Heart left ventricle (tissue), 16 donors: ENCODE measurements at regions of chr11 and their contacts with region 1.

Region 1: DNA sequence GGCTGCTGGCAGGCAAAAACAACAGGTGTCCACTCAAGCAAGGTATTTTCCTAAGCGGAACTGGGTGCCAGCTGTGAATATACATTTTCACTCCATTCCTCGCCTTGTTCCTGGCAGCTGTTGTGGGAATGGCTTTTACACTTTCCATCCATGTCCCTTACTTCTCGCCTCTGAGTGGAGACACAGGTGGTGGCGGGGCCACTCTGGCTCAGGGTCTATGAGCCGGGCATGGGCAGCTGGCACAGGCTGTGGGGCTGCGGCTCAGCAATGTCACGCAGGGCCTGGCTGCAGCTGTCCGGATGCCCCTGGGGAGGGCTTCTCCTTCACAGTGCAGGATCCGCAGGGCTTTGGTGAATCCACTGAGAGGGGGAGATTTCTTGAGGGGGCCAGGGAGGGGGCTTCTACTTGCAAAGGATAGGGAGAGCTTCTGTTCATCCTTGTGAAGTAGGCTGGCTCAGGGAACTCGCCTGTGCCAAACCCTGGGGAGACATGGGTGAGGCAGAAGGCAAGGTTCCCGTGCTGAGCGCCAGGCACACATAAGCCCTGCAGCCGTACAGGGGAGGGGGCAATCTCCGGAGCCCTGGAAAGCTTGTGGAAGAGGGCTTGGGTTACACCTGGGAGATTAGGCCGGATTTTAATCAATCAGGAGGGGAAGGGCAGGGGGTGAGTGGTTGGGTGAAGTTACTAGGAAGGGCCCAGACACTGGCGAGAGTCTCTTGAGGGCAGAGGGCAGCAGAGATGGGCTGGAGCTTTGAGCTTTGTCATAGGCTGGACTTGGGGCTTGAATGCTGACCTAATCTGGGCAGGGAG is 45.7 kb downstream of the KCNQ1OT1 start:
- DNase-seq: peak in 1 of 5 donors; percentile 10
- ATAC-seq: no peak
- H3K4me3 ChIP-seq: no peak overlapping the region
- H3K27ac ChIP-seq: peak overlapping the region in 1 of 12 donors; percentile 47
- H3K4me1 ChIP-seq: peaks cover 0 to 22% (median 0%) of the 10 kb centered on the region in 12 donors
- H3K27me3 ChIP-seq: no peaks in the 10 kb centered on the region
- CTCF ChIP-seq: no peak
- POLR2A ChIP-seq: no peak

Region 2: GRCh38 chr11:2599561-2600182 is 54.5 kb before region 1 on chr11:
- intact Hi-C with region 1: loop called in 1 of 10 experiments (anchors 5 kb)
- DNase-seq: peak in 2 of 5 donors; percentile 26 to 31
- ATAC-seq: peak; percentile 27 to 54 (median 44)
- H3K4me3 ChIP-seq: no peak overlapping the region
- H3K27ac ChIP-seq: peak overlapping the region in 6 of 12 donors; percentile 5 to 51 (median 34)
- H3K4me1 ChIP-seq: peaks cover 0 to 11% (median 5%) of the 10 kb centered on the region in 12 donors
- H3K27me3 ChIP-seq: no peaks in the 10 kb centered on the region
- CTCF ChIP-seq: no peak
- POLR2A ChIP-seq: no peak